Activated T-helper 2 cell treated with anti-CD3 and anti-CD28 coated beads, Interferon-gamma antibody, Interleukin-2, Interleukin-4, amounts not matched to agents 10 μg/mL and 5 μg/mL and 100 μg/mL, durations not matched to agents 14 hours and 24 hours and 36 hours (primary cell): ENCODE measurements at regions of chr12 and their contacts with region 1.

Region 1: GRCh38 chr12:9027161-9028059 is 38.1 kb downstream of the KLRG1 start:
- DNase-seq: no peak
- H3K4me3 Mint-ChIP-seq: no peak overlapping the region
- H3K27ac Mint-ChIP-seq: peak overlapping the region; percentile 91
- H3K4me1 Mint-ChIP-seq: peaks cover 22% of the 10 kb centered on the region
- H3K27me3 Mint-ChIP-seq: no peaks in the 10 kb centered on the region

Region 2: DNA sequence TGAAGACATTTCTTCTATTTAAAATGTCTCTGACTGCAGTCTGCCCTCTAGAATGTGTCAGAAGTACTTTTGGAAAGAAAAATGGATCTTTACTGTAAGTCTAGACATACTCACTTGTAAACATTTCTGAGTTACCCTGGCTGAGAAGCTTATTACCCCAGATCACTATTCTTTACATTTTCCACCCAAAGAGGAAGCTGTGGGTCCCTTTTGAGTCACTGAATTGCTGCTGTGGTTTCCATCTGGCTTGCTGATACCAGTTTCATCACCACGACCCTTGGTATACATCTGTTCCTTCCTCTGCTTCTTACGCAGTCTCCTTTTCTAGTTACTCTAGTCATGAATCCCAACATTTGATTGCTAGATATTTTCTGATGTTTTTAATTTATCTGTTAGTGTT is 534.3 kb before region 1 on chr12:
- intact Hi-C with region 1: loop called (anchors 2 kb)
- DNase-seq: peak; percentile 26
- H3K4me3 Mint-ChIP-seq: no peak overlapping the region
- H3K27ac Mint-ChIP-seq: peak overlapping the region; percentile 36
- H3K4me1 Mint-ChIP-seq: peaks cover 22% of the 10 kb centered on the region
- H3K27me3 Mint-ChIP-seq: peaks cover 64% of the 10 kb centered on the region

Region 3: GRCh38 chr12:8644345-8645248 is 382.8 kb before region 1 on chr12:
- intact Hi-C with region 1: loop called (anchors 1 kb)
- DNase-seq: peak; percentile 46
- H3K4me3 Mint-ChIP-seq: peak overlapping the region; percentile 31
- H3K27ac Mint-ChIP-seq: peak overlapping the region; percentile 34
- H3K4me1 Mint-ChIP-seq: peaks cover 35% of the 10 kb centered on the region
- H3K27me3 Mint-ChIP-seq: peaks cover 41% of the 10 kb centered on the region

Region 4: DNA sequence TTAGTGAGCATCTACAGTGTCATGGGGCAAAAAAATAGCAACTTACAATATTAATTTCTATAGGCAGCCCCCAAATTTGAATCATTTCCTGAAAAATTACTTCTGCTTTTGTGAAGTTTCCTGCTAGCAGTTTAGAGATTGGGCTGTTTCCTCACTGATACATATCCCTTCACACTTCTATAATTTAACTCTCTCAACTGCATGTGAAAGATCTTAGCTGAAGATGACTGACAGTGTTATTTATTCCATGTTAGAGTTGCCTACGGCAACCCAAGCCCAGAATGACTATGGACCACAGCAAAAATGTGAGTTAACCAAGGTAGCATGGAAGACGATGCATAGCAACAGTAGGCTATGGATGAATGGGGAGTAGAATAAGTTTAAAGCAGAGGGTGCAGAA is 38.0 kb before region 1 on chr12 and contains the start of gene KLRG1:
- intact Hi-C with region 1: loop called (anchors 2 kb)
- DNase-seq: no peak
- H3K4me3 Mint-ChIP-seq: no peak within 1 kb of the TSS
- H3K27ac Mint-ChIP-seq: no peak within 1 kb of the TSS
- H3K4me1 Mint-ChIP-seq: peaks cover 34% of the 10 kb centered on the region
- H3K27me3 Mint-ChIP-seq: peaks cover 7% of the 10 kb centered on the region
- total RNA-seq, gene KLRG1: 0.85 and 1.2 TPM in 2 replicates

Region 5: GRCh38 chr12:8996682-8997360 is 30.6 kb before region 1 on chr12:
- intact Hi-C with region 1: loop called (anchors 1 kb)
- DNase-seq: no peak
- H3K4me3 Mint-ChIP-seq: no peak overlapping the region
- H3K27ac Mint-ChIP-seq: no peak overlapping the region
- H3K4me1 Mint-ChIP-seq: peaks cover 25% of the 10 kb centered on the region
- H3K27me3 Mint-ChIP-seq: peaks cover 34% of the 10 kb centered on the region

Region 6: DNA sequence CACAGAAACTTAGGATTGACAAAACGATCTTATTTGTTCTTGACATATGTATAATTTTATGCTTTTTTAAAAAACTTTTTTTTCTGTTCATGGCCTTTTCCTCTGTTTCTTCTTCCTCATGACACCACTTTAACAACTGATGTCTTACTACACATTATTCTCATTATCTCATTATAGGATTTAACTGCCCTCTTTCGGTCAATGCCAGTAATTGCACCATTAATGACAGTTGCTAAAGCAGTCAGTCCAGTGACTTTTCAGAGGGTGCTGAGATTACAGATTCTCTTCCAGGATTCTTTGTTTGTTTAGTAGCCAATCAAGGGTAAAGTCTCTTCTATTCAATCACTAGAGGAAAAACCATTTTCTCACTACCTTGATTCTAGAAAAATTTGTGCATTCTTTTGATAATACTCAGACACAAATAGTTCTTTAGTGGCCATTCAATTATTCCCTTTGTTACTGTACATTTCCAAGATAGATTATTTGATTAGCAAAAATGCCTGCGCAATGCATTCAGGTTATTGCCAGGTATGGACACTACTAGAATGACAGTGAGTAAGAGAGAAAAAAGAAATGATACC is 12.1 kb after region 1 on chr12:
- intact Hi-C with region 1: loop called (anchors 1 kb)
- DNase-seq: no peak
- H3K4me3 Mint-ChIP-seq: no peak overlapping the region
- H3K27ac Mint-ChIP-seq: no peak overlapping the region
- H3K4me1 Mint-ChIP-seq: peaks cover 24% of the 10 kb centered on the region
- H3K27me3 Mint-ChIP-seq: peaks cover 21% of the 10 kb centered on the region

Region 7: DNA sequence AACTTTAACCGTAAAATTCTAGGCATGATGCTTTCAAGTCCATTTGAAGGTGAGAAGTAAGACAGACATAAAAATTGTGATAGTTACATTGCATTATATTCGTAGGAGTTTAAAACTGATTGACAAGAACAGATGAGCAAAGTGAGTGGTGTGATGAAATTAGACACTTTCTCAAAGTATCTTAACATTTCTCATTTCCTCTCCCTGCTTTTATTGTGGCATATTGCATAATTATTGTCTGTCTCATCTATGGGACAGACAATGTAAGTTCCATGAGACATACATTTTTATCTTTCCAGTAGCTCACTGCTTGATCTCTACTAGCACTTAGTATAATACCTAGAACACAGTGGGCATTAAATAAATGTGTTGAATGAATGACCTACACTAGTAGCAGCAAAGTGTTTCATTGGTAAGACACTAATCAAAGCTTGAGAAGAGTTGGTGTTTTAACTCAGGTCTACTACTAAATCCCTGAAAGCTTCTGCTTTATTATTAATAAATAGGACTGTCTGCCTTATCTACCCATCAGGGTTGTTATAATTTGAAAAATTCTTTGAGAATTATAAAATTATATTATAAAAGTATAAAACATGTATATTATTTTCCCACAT is 69.3 kb after region 1 on chr12:
- intact Hi-C with region 1: no loop called
- DNase-seq: no peak
- H3K4me3 Mint-ChIP-seq: no peak overlapping the region
- H3K27ac Mint-ChIP-seq: no peak overlapping the region
- H3K4me1 Mint-ChIP-seq: no peaks in the 10 kb centered on the region
- H3K27me3 Mint-ChIP-seq: no peaks in the 10 kb centered on the region

Region 8: DNA sequence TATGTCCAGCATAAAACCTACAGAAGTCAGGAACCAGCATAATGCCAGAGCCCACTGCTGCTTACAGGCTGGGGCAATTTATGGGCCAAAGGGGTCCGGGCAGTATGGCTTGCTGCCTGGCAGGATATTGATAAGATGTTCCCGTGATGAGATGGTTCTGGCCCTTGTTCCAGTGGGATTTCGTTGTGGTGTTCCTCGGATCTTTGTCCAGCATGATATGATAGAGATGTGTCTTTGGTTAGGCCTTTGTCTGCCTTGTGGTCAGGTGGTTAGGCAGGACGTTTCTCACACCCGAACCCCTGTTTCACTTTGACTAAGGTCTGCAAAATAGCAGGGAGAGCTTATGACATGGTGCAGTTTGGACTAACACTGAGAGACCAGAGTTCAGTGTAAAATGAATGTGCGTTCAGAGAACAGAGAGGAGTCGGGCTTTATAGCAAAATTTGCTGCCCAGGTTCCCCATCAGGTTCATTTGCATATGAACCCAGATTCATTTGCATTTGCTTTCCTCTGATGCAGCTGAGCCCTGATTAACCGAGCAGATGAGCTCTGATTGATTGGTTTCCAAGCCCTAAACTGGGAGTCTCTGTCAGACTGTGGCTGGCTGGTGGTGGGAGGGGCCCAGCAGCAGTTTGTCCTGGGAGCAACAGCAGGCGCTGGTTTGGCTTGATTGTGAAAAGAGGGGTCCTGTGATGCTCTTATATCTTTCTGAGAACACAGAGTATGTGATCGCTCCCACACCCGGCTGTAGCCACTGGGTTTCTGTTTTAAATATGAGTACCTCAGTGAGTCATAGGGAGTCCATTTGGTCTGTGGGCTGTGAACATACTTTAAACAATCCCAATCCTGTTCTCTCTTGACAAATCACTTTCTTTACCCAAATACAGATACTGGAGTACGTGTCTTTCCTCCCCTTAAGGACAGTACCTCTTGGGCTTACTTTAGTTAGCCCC is 337.1 kb after region 1 on chr12:
- intact Hi-C with region 1: loop called (anchors 1 kb)
- DNase-seq: peak; percentile 43
- H3K4me3 Mint-ChIP-seq: peak overlapping the region; percentile 49
- H3K27ac Mint-ChIP-seq: peak overlapping the region; percentile 86
- H3K4me1 Mint-ChIP-seq: peaks cover 47% of the 10 kb centered on the region
- H3K27me3 Mint-ChIP-seq: peaks cover 51% of the 10 kb centered on the region